K562 (cell line): ENCODE measurements at regions of chr18 and their contacts with region 1.

Region 1: GRCh38 chr18:623761-624620 is 27.2 kb downstream of the CLUL1 start:
- DNase-seq: peak; percentile 61 to 85 (median 64)
- ATAC-seq: peak; percentile 95
- H3K4me3 ChIP-seq: no peak overlapping the region
- H3K27ac ChIP-seq: no peak overlapping the region
- H3K4me1 ChIP-seq: peaks cover 3 to 4% of the 10 kb centered on the region in 2 experiments; a peak in 3 of 5 replicates
- H3K27me3 ChIP-seq: peaks cover 0 to 5% of the 10 kb centered on the region in 2 experiments; a peak in 2 of 5 replicates
- CTCF ChIP-seq: peak; percentile 78 to 85 (median 82)
- EP300 ChIP-seq: no peak
- POLR2A ChIP-seq: no peak
- RAD21 ChIP-seq: peak; percentile 70 to 81

Region 2: GRCh38 chr18:670522-670921 is 46.5 kb after region 1 on chr18:
- CTCF ChIA-PET with region 1: no interaction called
- POLR2A ChIA-PET with region 1: interaction called, 3 read pairs
- in situ Hi-C with region 1: no loop called
- intact Hi-C with region 1: loop called (anchors 5 kb)
- DNase-seq: no peak
- ATAC-seq: no peak
- H3K4me3 ChIP-seq: no peak overlapping the region
- H3K27ac ChIP-seq: no peak overlapping the region
- H3K4me1 ChIP-seq: no peaks in the 10 kb centered on the region; a peak in 1 of 5 replicates
- H3K27me3 ChIP-seq: no peaks in the 10 kb centered on the region
- CTCF ChIP-seq: no peak
- EP300 ChIP-seq: no peak
- POLR2A ChIP-seq: peak; percentile 61
- RAD21 ChIP-seq: no peak

Region 3: DNA sequence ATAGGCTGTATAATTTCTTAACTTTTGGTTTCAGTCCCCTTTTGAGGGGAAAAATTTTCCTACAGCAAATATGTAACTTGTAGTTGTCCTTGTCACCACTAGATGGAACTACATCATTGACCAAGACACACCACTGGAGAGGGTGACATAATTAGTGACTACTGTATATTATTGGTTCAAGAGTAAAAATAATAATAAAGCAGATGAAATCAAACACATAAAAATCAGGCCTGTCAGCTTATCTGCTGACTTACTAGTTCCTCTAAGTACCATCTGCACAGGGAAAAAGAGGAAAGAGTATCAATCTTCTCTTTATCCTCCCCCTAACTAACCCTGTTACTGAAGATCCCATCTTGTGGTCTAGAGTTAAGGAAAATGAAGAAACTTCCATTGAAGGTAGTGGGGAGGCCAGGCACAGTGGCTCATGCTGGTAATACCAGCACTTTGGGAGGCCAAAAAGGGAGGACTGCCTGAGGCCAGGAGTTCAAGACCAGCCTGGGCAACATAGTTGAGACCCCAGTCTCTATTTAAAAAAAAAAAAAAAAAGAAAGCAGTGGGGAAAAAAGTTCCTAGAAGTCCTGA is 118.0 kb after region 1 on chr18:
- CTCF ChIA-PET with region 1: interaction called, 5 read pairs
- POLR2A ChIA-PET with region 1: no interaction called
- in situ Hi-C with region 1: no loop called
- intact Hi-C with region 1: loop called (anchors 10 kb)
- DNase-seq: peak; percentile 58 to 69 (median 66)
- ATAC-seq: peak; percentile 90
- H3K4me3 ChIP-seq: no peak overlapping the region
- H3K27ac ChIP-seq: no peak overlapping the region
- H3K4me1 ChIP-seq: no peaks in the 10 kb centered on the region
- H3K27me3 ChIP-seq: no peaks in the 10 kb centered on the region
- CTCF ChIP-seq: peak; percentile 69 to 92 (median 70); a peak in 5 of 6 replicates
- EP300 ChIP-seq: no peak
- POLR2A ChIP-seq: no peak
- RAD21 ChIP-seq: peak; percentile 96 to 97

Region 4: GRCh38 chr18:995629-996028 is 371.6 kb after region 1 on chr18:
- CTCF ChIA-PET with region 1: no interaction called
- POLR2A ChIA-PET with region 1: no interaction called
- in situ Hi-C with region 1: no loop called
- intact Hi-C with region 1: no loop called
- DNase-seq: no peak
- ATAC-seq: no peak
- H3K4me3 ChIP-seq: no peak overlapping the region
- H3K27ac ChIP-seq: no peak overlapping the region
- H3K4me1 ChIP-seq: no peaks in the 10 kb centered on the region; a peak in 1 of 5 replicates
- H3K27me3 ChIP-seq: no peaks in the 10 kb centered on the region
- CTCF ChIP-seq: no peak
- EP300 ChIP-seq: no peak
- POLR2A ChIP-seq: no peak
- RAD21 ChIP-seq: no peak